ENCODE measurements at regions of chr1 and their contacts with region 1.

Region 1: GRCh38 chr1:108750476-108751181 is 4.2 kb downstream of the STXBP3 start:
- DNase-seq: no peak
- H3K4me3 ChIP-seq: no peak overlapping the region
- H3K27ac ChIP-seq: no peak overlapping the region
- H3K4me1 ChIP-seq: peaks cover 57% of the 10 kb centered on the region
- H3K27me3 ChIP-seq: no peaks in the 10 kb centered on the region
- CTCF ChIP-seq: no peak
- POLR2A ChIP-seq: no peak

Region 2: DNA sequence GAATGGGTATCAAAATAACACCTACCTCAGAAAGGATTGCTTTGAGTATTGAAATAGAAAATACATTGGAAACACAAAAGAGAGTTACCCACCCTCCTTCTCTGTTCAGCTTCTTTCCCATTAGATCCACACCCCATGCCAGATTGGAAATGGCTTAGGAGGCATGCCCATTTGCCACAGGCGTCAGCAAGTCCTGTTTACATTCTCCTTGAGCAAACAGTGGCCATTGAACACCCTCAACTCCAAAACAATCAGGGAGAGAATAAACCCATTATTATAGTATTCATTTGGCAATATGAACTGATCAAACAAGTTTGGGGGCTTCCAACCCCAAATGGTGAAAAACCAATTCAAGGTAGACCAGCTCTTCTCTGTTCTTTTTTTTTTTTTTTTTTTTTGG is 365.7 kb after region 1 on chr1:
- intact Hi-C with region 1: loop called (anchors 5 kb)
- DNase-seq: no peak
- H3K4me3 ChIP-seq: no peak overlapping the region
- H3K27ac ChIP-seq: no peak overlapping the region
- H3K4me1 ChIP-seq: peaks cover 26% of the 10 kb centered on the region
- H3K27me3 ChIP-seq: no peaks in the 10 kb centered on the region
- CTCF ChIP-seq: no peak
- POLR2A ChIP-seq: no peak